Activated T-helper 2 cell treated with anti-CD3 and anti-CD28 coated beads, Interferon-gamma antibody, Interleukin-2, Interleukin-4, amounts not matched to agents 10 μg/mL and 5 μg/mL and 100 μg/mL, durations not matched to agents 14 hours and 24 hours and 36 hours (primary cell): ENCODE measurements at regions of chr4 and their contacts with region 1.

Region 1: DNA sequence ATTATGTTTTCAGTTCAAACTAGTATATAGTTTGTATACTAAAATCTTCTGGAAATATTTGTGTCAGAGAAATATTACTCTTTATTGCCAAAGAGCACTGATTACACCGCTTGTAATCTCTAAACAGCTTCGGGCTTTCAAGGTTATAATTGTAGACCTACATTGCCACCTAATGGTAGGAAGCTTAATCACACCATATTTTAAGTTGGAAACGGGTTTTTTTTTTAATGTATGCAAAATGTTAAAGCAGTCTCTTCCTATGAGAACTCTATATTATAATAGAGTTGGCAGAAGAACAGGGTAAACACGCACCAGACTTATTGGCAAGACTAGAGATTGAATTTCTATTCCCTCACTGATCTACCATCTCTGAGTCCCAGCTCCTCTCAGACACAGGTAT is 19.5 kb upstream of the NFXL1 start:
- DNase-seq: no peak
- H3K4me3 Mint-ChIP-seq: no peak overlapping the region
- H3K27ac Mint-ChIP-seq: no peak overlapping the region
- H3K4me1 Mint-ChIP-seq: no peaks in the 10 kb centered on the region
- H3K27me3 Mint-ChIP-seq: peaks cover 17% of the 10 kb centered on the region

Region 2: GRCh38 chr4:47662975-47663374 is 270.9 kb before region 1 on chr4:
- intact Hi-C with region 1: loop called (anchors 2 kb)
- DNase-seq: no peak
- H3K4me3 Mint-ChIP-seq: no peak overlapping the region
- H3K27ac Mint-ChIP-seq: no peak overlapping the region
- H3K4me1 Mint-ChIP-seq: no peaks in the 10 kb centered on the region
- H3K27me3 Mint-ChIP-seq: peaks cover 13% of the 10 kb centered on the region

Region 3: GRCh38 chr4:47686294-47686872 is 247.5 kb before region 1 on chr4:
- intact Hi-C with region 1: loop called (anchors 1 kb)
- DNase-seq: peak; percentile 32
- H3K4me3 Mint-ChIP-seq: no peak overlapping the region
- H3K27ac Mint-ChIP-seq: no peak overlapping the region
- H3K4me1 Mint-ChIP-seq: peaks cover 4% of the 10 kb centered on the region
- H3K27me3 Mint-ChIP-seq: peaks cover 15% of the 10 kb centered on the region

Region 4: GRCh38 chr4:47704693-47705325 is 229.0 kb before region 1 on chr4:
- intact Hi-C with region 1: loop called (anchors 2 kb)
- DNase-seq: no peak
- H3K4me3 Mint-ChIP-seq: no peak overlapping the region
- H3K27ac Mint-ChIP-seq: no peak overlapping the region
- H3K4me1 Mint-ChIP-seq: no peaks in the 10 kb centered on the region
- H3K27me3 Mint-ChIP-seq: peaks cover 18% of the 10 kb centered on the region